Heart right ventricle (tissue), 16 donors: ENCODE measurements at regions of chr20 and their contacts with region 1.

Region 1: DNA sequence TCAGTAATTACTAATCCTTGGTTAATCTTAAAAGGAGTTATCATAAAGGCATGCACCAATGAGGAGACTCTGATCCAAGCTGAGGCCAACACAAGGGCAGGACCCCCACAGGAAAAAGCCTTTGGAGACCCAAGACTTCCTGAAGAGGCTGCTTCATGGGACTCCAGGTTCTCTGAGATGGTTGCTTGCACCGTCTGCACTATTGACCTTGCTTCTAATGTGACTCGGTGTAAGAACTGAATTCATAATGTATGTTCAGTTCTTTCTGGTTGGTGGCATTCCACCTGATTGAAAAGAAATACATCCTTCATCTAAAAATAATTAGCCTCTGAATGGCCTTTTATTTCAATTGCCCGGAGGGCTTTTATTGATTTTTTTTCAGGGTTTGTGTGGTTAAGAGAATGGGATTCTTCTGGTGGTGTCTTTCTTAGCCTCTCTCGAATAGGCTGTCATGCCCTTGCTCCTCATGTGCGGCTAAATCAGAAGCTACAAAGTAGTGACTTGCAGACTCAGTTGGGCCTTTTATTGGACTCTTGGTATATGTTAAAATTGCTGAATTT is 201.6 kb upstream of the PLCB4 start:
- DNase-seq: no peak
- ATAC-seq: peak in 1 of 8 donors; percentile 11
- H3K4me3 ChIP-seq: no peak overlapping the region
- H3K27ac ChIP-seq: peak overlapping the region in 2 of 10 donors; percentile 30 to 34
- H3K4me1 ChIP-seq: peaks cover 0 to 14% (median 0%) of the 10 kb centered on the region in 9 donors
- H3K27me3 ChIP-seq: no peaks in the 10 kb centered on the region
- CTCF ChIP-seq: no peak

Region 2: DNA sequence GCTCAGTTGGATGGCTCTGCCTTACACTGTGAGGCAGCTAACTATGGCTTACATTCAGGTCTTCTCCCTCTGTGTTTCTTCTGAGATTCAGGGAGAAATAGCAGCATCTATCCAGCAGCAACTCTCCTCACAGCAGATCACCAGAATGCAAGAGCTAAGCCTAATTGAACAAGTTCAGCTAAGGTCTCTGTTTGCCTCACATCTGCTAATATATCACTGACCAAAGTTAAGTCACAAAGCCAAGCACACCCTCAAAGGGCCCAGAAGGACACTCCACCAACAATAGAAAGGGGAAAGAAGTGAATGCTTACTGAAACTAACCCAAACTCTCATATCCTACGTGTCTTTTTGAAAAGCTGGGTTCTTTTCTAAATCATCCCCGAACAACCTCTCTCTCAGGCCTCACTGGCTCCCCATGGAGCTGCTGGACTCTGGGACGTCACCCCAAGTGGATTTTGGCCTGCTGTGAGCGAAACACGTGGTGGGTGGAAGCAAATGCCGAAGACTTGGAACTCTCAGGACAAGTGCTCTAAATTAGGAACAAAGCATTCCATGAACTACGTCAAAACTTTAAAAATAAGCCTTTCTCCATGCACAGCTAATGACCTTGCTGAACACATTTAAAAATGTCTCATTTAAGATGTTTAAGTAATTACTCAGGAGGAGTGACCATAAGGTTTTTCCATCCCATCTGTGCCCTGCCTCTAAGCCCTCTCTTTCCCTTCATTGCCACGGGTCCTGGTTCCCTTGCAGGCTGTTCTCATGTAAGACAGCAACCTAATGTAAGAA is 34.2 kb after region 1 on chr20:
- intact Hi-C with region 1: loop called in 1 of 10 experiments (anchors 5 kb)
- DNase-seq: peak; percentile 42 to 84
- ATAC-seq: peak; percentile 80 to 97 (median 94)
- H3K4me3 ChIP-seq: no peak overlapping the region
- H3K27ac ChIP-seq: peak overlapping the region; percentile 3 to 81 (median 68)
- H3K4me1 ChIP-seq: peaks cover 4 to 35% (median 19%) of the 10 kb centered on the region in 9 donors
- H3K27me3 ChIP-seq: no peaks in the 10 kb centered on the region
- CTCF ChIP-seq: no peak